Posterior cingulate gyrus (tissue), 11 donors: ENCODE measurements at regions of chr4 and their contacts with region 1.

Region 1: DNA sequence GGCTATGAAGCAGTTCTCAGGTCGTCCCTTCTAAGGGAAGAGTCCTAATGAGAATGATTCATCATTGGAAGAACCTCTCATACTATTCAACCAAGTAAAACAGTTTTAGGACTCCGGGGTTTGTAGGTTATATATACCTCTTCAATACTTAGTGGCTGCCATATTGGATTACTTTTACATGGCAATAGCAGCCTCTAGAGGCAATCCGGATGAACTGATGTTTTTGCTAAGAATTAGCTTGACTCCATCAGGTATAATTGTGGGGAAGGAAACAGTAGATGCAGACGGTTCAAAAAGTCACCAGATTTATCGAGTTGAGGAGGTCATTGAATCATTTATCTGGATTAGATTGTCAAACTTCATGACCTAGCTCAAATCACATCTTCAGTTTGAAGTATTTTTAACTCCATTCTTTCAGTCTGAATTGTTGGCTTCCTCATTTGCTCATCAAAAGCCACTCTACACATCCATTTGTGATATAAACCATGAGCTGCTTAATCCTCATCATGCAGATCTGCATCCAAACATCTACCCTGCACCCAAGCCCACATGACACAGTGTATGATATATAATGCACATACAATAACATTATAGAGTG is 28.4 kb downstream of the GUCY1B1 start:
- DNase-seq: no peak

Region 2: DNA sequence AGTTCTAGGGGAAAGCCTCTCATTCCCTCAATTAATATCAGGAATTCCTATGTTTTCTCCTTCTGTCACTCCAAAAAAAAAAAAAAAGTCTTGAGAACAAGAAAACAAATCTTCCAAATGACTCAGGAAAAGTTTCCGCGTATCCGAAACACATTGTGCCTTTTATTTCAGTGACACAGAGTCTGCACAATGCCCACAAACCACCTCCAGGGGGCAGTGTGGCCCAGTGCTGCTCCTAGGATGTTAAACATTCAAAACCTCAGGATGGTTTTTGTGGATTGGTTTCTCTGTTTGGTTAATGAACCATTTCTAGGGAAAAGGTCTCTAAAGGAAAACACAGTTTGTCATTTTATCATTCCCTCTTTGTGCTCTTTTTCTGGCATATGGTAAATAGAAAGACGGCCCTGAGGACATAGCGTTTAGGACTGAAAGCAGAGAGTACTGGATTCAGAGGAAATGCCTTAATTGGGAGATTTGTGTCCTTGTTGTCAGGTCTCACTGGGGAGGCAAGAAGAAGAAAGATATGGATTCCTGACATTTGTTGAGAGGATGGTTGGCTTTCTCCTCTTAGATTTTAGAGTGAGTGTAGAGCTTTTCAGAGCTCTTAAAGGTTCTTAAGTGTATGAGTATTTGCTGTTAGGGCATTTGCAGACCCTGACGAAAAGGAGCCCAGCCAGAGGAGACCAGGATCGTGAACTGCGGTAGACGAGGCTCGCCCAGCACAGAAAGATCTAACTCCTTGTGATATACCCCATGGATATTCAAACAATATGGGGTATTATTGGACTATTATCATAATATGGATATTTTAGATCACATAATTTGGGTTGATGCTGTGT is 344.7 kb before region 1 on chr4:
- intact Hi-C with region 1: loop called (anchors 1 kb)
- DNase-seq: peak; percentile 67 to 97 (median 88)

Region 3: GRCh38 chr4:155529272-155529671 is 257.9 kb before region 1 on chr4:
- intact Hi-C with region 1: loop called (anchors 5 kb)
- DNase-seq: no peak